Heart left ventricle (tissue), 16 donors: ENCODE measurements at regions of chr4 and their contacts with region 1.

Region 1: GRCh38 chr4:26081795-26082498 is 167.9 kb downstream of the SMIM20 start:
- DNase-seq: no peak
- ATAC-seq: peak; percentile 43 to 66 (median 55)
- H3K4me3 ChIP-seq: no peak overlapping the region
- H3K27ac ChIP-seq: peak overlapping the region in 1 of 12 donors; percentile 55
- H3K4me1 ChIP-seq: peaks cover 0 to 40% (median 0%) of the 10 kb centered on the region in 12 donors
- H3K27me3 ChIP-seq: peaks cover 0 to 3% (median 0%) of the 10 kb centered on the region in 9 donors
- CTCF ChIP-seq: peak; percentile 49 to 76 (median 69)
- POLR2A ChIP-seq: no peak

Region 2: GRCh38 chr4:25783943-25784342 is 298.0 kb before region 1 on chr4:
- intact Hi-C with region 1: no loop called
- DNase-seq: no peak
- ATAC-seq: no peak
- H3K4me3 ChIP-seq: no peak overlapping the region
- H3K27ac ChIP-seq: no peak overlapping the region
- H3K4me1 ChIP-seq: peaks cover 0 to 10% (median 0%) of the 10 kb centered on the region in 12 donors
- H3K27me3 ChIP-seq: no peaks in the 10 kb centered on the region
- CTCF ChIP-seq: no peak
- POLR2A ChIP-seq: no peak

Region 3: DNA sequence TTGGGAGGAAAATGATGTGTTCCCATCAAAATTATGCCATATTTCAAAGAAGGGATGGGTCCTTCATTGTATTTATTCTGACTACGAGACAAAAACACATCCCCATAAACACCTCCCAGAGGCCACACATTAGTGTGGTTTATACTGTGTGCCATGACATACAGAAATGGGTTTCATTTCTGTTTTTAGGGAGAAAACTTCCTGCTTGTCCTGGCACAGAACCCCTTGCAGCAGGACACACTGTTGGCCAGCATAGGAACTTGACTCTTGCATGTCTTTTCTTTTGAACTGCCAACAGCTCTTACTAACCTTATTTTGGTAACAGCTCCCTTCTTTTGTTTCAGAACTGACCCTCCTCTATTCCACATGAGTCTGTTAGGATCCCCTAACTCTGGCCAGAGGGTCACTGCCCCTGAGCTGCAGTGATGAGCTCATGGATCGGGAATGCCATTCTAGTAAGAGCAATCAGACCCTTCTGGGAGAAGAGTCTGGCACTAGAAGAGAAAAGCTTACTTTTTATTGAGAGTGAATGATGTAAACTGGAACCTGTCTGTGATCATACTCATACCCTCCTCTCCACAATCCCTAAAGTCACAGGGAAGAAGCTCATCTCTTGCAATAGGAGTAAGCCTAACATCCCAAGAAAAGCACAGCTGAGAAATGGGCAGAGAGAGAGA is 81.5 kb before region 1 on chr4:
- intact Hi-C with region 1: loop called in 2 of 10 experiments (anchors 10 kb)
- DNase-seq: no peak
- ATAC-seq: peak in 2 of 4 donors; percentile 56 to 63
- H3K4me3 ChIP-seq: no peak overlapping the region
- H3K27ac ChIP-seq: peak overlapping the region in 1 of 12 donors; percentile 71
- H3K4me1 ChIP-seq: peaks cover 0 to 23% (median 0%) of the 10 kb centered on the region in 12 donors
- H3K27me3 ChIP-seq: no peaks in the 10 kb centered on the region
- CTCF ChIP-seq: no peak
- POLR2A ChIP-seq: no peak

Region 4: GRCh38 chr4:26130173-26130572 is 48.2 kb after region 1 on chr4:
- intact Hi-C with region 1: no loop called
- DNase-seq: no peak
- ATAC-seq: no peak
- H3K4me3 ChIP-seq: no peak overlapping the region
- H3K27ac ChIP-seq: no peak overlapping the region
- H3K4me1 ChIP-seq: peaks cover 0 to 6% (median 0%) of the 10 kb centered on the region in 12 donors
- H3K27me3 ChIP-seq: no peaks in the 10 kb centered on the region
- CTCF ChIP-seq: no peak
- POLR2A ChIP-seq: no peak

Region 5: GRCh38 chr4:26179316-26179760 is 97.4 kb after region 1 on chr4:
- intact Hi-C with region 1: loop called in 1 of 10 experiments (anchors 10 kb)
- DNase-seq: no peak
- ATAC-seq: no peak
- H3K4me3 ChIP-seq: no peak overlapping the region
- H3K27ac ChIP-seq: peak overlapping the region in 1 of 12 donors; percentile 25
- H3K4me1 ChIP-seq: peaks cover 0 to 9% (median 0%) of the 10 kb centered on the region in 12 donors
- H3K27me3 ChIP-seq: peaks cover 0 to 5% (median 0%) of the 10 kb centered on the region in 9 donors
- CTCF ChIP-seq: no peak
- POLR2A ChIP-seq: no peak